Activated T-helper 2 cell treated with anti-CD3 and anti-CD28 coated beads, Interferon-gamma antibody, Interleukin-2, Interleukin-4, amounts not matched to agents 10 μg/mL and 5 μg/mL and 100 μg/mL, durations not matched to agents 14 hours and 24 hours and 36 hours (primary cell): ENCODE measurements at regions of chr4 and their contacts with region 1.

Region 1: DNA sequence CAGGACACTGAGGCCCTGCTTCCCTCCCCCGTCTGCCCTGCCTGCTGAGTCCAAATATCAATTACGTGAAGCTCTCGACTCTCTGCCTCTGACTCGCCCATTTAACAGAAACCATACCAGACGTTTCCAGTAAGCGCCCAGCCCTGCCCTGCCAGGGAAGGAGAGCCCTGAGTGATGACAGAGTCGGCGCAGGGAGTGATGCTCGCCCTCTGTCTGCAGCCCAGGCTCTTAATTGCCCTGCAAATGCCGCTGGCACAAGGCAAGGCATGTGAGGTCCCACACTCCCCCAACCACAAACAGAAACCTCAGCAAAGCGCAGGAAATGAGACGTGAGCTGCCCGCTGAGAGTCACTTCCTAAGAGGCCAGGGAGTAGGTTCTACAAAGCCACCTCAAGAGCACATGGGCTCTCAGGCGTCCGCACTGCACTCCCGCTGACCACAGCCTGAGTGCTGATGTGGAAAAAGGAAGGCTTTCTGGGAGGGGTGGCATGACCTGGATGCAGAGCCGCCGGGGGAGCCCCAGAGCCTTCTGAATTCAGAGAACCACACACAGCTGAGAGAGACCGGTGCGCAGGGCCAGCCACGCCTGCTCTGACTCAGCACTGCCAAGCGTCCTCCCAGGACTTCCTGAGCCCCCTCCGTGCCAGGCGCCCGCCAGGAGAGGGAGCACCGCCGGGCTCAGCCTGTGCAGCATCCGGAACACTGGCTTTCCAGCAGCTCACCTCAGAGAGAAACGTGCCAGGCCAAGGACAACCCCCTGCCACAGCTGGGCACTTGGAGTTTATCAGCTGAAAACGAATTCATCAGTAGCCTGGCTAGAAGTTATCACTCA is 5.3 kb downstream of the ZFYVE28 start:
- DNase-seq: peak; percentile 91
- H3K4me3 Mint-ChIP-seq: peak overlapping the region; percentile 74
- H3K27ac Mint-ChIP-seq: peak overlapping the region; percentile 96
- H3K4me1 Mint-ChIP-seq: peaks cover 57% of the 10 kb centered on the region
- H3K27me3 Mint-ChIP-seq: peaks cover 14% of the 10 kb centered on the region

Region 2: DNA sequence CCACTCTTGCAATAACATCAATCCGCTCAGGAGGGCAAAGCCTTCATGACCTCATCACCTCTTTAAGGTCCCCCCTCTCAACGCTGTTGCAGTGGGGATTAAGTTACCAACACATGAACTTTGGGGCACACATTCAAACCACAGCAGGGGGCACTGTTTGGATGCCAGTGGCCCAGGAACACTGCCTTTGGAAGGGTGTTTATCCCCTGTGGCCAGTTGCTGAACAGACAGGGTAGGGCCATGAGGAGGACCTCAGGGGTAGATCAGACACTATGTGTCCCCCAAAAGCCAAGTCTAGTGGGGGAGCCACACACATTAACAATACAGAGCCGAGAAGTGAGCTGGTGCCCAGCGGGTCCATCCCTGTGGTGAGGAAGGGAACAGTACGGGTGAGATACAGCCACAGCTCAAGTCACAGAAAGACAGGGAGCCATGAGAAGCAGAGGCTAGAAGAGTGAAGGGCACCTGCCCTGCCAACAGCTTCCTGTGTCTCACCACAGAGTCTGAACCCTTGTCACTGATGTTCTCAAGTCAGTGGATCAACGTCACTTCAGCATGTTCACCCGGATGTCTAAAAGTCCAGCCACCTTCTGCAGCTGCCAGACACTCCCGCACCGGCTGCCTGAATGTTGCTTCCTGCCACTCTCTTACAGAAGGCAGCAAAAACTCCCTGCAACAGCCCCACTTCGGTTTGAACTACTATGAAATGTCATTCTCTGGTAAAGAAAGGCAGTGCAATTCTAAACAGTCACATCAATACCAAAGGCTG is 131.3 kb before region 1 on chr4:
- intact Hi-C with region 1: loop called (anchors 2 kb)
- DNase-seq: peak; percentile 68
- H3K4me3 Mint-ChIP-seq: peak overlapping the region; percentile 17
- H3K27ac Mint-ChIP-seq: peak overlapping the region; percentile 90
- H3K4me1 Mint-ChIP-seq: peaks cover 24% of the 10 kb centered on the region
- H3K27me3 Mint-ChIP-seq: no peaks in the 10 kb centered on the region

Region 3: GRCh38 chr4:2320152-2320551 is 92.9 kb before region 1 on chr4:
- intact Hi-C with region 1: no loop called
- DNase-seq: peak; percentile 4
- H3K4me3 Mint-ChIP-seq: no peak overlapping the region
- H3K27ac Mint-ChIP-seq: no peak overlapping the region
- H3K4me1 Mint-ChIP-seq: no peaks in the 10 kb centered on the region
- H3K27me3 Mint-ChIP-seq: peaks cover 3% of the 10 kb centered on the region